ENCODE measurements at regions of chr5 and their contacts with region 1.

Region 1: DNA sequence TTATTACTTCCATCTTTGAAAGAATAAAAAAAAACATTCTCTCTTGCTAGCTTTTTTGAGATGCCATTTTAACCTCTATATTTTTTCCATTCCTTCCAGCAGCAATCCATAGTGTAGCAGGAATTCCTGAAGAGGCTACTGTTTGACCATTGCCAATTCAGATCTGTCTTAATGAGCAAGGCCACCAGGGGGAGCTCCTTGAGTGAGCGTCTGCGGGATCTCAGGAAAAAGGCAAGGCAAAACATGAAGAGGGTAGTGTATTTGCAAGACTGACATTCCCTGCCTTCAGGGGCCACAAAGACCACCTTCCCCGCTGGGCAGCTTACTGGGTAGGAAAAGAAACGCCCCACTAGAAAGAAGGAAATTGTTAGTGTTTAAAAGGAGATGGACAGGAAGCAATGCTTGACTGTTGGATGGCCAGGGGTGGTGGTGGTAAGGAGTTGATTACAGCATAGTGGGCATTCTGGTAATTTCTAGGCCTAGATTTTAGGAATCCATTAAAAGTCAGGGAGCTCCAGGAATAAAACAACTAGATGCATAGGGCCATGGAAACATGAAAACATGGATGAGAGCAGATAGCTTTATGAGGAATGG is 206.6 kb upstream of the HAPLN1 start:
- DNase-seq: peak; percentile 60
- H3K4me3 Mint-ChIP-seq: no peak overlapping the region
- H3K27ac Mint-ChIP-seq: no peak overlapping the region
- H3K4me1 Mint-ChIP-seq: no peaks in the 10 kb centered on the region
- H3K27me3 Mint-ChIP-seq: peaks cover 6% of the 10 kb centered on the region

Region 2: DNA sequence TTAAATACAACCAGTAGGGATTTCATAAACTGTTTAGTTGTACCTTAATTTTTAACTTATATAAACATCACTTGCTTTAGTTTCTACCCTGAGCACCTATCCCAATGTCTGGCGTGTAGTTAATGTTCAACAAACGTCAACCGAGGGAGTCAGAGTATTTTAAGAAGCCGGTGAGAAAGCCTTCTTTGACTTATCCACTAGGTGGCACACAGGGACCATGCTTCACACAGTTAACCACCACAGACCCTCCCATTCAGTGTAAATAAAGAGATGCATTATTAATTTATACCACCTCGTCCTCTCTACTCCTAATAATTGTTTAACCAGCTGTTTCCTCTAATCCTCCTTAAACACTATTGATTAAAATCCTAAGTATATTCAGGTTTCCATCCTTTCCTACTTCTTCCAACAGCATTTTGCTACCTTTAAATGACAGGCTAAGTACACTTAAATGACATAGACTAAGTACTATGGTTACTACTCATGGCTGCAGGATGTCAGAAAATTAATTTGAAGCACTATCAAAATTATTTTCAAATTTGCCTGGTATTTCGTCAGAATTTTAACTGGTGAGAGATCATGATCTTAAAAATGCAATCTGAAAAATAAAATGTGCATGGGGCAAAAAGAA is 208.9 kb before region 1 on chr5:
- CTCF ChIA-PET with region 1: interaction called, 3 read pairs
- intact Hi-C with region 1: loop called (anchors 5 kb)
- DNase-seq: peak; percentile 33
- H3K4me3 Mint-ChIP-seq: no peak overlapping the region
- H3K27ac Mint-ChIP-seq: no peak overlapping the region
- H3K4me1 Mint-ChIP-seq: peaks cover 6% of the 10 kb centered on the region
- H3K27me3 Mint-ChIP-seq: peaks cover 51% of the 10 kb centered on the region

Region 3: DNA sequence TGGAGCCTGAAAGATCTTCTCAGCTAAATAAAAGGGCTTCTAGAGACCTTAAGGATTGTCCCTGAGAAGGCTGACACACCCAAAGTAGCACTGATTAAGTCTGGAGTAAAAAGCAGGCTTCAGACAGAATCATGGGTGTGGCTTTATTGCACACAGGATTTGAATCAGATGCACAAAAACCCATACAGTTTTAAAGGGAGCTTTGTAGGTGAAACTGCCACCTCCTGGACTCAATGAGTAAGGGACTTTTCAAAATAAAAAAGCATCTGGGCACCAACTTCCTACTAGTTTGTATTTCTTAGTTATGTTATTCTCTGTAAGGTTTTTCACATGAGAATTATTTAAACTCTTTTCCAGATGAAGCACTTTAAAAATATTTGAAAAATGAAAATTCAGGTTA is 328.1 kb after region 1 on chr5:
- CTCF ChIA-PET with region 1: no interaction called
- intact Hi-C with region 1: loop called (anchors 5 kb)
- DNase-seq: no peak
- H3K4me3 Mint-ChIP-seq: no peak overlapping the region
- H3K27ac Mint-ChIP-seq: no peak overlapping the region
- H3K4me1 Mint-ChIP-seq: no peaks in the 10 kb centered on the region
- H3K27me3 Mint-ChIP-seq: no peaks in the 10 kb centered on the region

Region 4: GRCh38 chr5:84450617-84451414 is 523.6 kb after region 1 on chr5:
- CTCF ChIA-PET with region 1: no interaction called
- intact Hi-C with region 1: loop called (anchors 2 kb)
- DNase-seq: no peak
- H3K4me3 Mint-ChIP-seq: no peak overlapping the region
- H3K27ac Mint-ChIP-seq: no peak overlapping the region
- H3K4me1 Mint-ChIP-seq: no peaks in the 10 kb centered on the region
- H3K27me3 Mint-ChIP-seq: no peaks in the 10 kb centered on the region